Activated naive CD4-positive, alpha-beta T cell treated with anti-CD3 and anti-CD28 coated beads for 36 hours (primary cell): ENCODE measurements at regions of chr1 and their contacts with region 1.

Region 1: DNA sequence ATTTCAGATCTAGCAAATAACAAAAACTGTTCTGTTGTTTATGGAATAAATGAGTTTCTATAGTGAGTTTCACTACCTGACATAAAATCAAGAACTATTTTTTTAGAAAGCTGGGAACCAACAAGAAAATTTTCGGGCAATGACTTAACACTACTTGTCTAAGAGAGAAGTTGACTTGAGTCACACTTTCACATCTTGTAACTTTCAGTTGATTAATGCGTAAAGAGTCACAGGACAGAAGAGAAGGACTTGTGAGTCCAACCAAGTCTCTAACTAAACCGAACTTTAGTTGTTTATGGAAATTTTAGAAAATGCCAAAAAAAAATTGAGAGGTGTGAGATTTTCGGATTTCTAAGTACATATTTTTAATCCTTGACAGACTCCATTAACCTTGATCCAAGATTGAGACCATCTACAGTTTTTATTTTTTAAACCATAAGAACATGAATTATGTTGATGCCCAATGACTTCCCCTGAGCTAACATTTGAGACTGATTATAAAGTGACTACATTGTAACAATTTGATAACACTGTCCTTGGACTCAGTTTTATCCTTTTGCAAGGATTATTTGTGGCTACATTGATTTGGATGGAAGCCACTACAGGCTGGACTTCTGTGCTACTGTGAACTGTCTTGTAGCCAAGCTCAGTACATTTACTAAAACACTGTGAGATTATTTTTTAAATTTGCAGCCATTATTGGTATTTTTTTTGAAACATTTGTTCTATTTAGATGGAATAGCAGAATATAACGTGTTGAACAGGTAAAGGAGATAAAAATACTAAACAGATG is 284.0 kb downstream of the PTPRC start:
- DNase-seq: no peak
- H3K4me3 Mint-ChIP-seq: no peak overlapping the region
- H3K27ac Mint-ChIP-seq: peak overlapping the region; percentile 79
- H3K4me1 Mint-ChIP-seq: peaks cover 71% of the 10 kb centered on the region
- H3K27me3 Mint-ChIP-seq: no peaks in the 10 kb centered on the region

Region 2: DNA sequence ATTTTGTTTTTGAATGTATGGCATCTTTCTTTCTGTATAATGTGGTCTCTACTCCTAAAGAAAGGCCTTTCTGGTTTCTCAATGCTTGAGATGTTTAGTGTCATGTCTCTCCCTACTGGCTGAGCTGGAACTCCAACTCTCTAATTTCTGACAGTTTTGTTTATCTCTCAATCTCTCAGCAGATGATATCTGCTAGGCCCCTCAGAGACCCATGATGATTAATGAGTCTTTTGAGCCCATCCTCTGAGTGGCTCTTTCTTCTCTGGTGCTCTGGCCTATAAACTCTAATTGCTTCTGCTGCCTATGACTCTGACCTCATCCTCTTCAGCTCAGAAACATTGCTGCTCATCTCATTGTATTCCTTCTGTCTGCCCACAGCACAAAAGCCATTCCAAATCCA is 1608.2 kb before region 1 on chr1:
- CTCF ChIA-PET with region 1: no interaction called
- intact Hi-C with region 1: no loop called
- DNase-seq: no peak
- H3K4me3 Mint-ChIP-seq: no peak overlapping the region
- H3K27ac Mint-ChIP-seq: no peak overlapping the region
- H3K4me1 Mint-ChIP-seq: no peaks in the 10 kb centered on the region
- H3K27me3 Mint-ChIP-seq: no peaks in the 10 kb centered on the region

Region 3: GRCh38 chr1:198167436-198167934 is 755.3 kb before region 1 on chr1:
- CTCF ChIA-PET with region 1: no interaction called
- intact Hi-C with region 1: loop called (anchors 5 kb)
- DNase-seq: peak; percentile 44
- H3K4me3 Mint-ChIP-seq: peak overlapping the region; percentile 55
- H3K27ac Mint-ChIP-seq: peak overlapping the region; percentile 93
- H3K4me1 Mint-ChIP-seq: peaks cover 90% of the 10 kb centered on the region
- H3K27me3 Mint-ChIP-seq: no peaks in the 10 kb centered on the region

Region 4: GRCh38 chr1:198880818-198881597 is 41.8 kb before region 1 on chr1:
- CTCF ChIA-PET with region 1: no interaction called
- intact Hi-C with region 1: loop called (anchors 1 kb)
- DNase-seq: peak; percentile 40
- H3K4me3 Mint-ChIP-seq: no peak overlapping the region
- H3K27ac Mint-ChIP-seq: peak overlapping the region; percentile 32
- H3K4me1 Mint-ChIP-seq: peaks cover 33% of the 10 kb centered on the region
- H3K27me3 Mint-ChIP-seq: no peaks in the 10 kb centered on the region

Region 5: GRCh38 chr1:198967566-198967965 is 44.7 kb after region 1 on chr1:
- CTCF ChIA-PET with region 1: no interaction called
- intact Hi-C with region 1: loop called (anchors 5 kb)
- DNase-seq: peak; percentile 12
- H3K4me3 Mint-ChIP-seq: no peak overlapping the region
- H3K27ac Mint-ChIP-seq: no peak overlapping the region
- H3K4me1 Mint-ChIP-seq: peaks cover 34% of the 10 kb centered on the region
- H3K27me3 Mint-ChIP-seq: no peaks in the 10 kb centered on the region

Region 6: DNA sequence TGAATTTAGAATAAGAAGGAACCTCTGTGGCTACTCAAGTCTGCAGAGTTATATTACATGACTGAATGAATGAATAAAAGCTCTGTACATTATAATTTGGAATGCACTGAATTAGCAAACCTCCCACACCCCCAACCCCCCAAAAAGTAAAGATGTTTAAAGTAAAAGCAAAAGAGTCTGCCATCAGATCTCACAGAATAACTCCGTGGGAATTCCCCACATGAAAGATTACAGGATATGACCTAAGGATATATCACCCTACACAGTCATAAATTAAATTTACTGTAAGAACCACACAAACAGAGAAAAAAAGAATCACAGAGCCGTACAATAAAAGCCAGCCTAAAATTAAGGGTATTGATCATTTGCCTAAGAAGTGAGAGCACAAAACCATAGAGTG is 303.3 kb after region 1 on chr1:
- CTCF ChIA-PET with region 1: no interaction called
- intact Hi-C with region 1: loop called (anchors 1 kb)
- DNase-seq: peak; percentile 66
- H3K4me3 Mint-ChIP-seq: peak overlapping the region; percentile 46
- H3K27ac Mint-ChIP-seq: peak overlapping the region; percentile 27
- H3K4me1 Mint-ChIP-seq: peaks cover 23% of the 10 kb centered on the region
- H3K27me3 Mint-ChIP-seq: no peaks in the 10 kb centered on the region